ENCODE measurements at regions of chr3 and their contacts with region 1.

Region 1: GRCh38 chr3:160941885-160942494 is 163.2 kb downstream of the B3GALNT1 start:
- DNase-seq: no peak
- H3K4me3 ChIP-seq: no peak overlapping the region
- H3K27ac ChIP-seq: no peak overlapping the region
- H3K4me1 ChIP-seq: peaks cover 4% of the 10 kb centered on the region
- H3K27me3 ChIP-seq: no peaks in the 10 kb centered on the region
- CTCF ChIP-seq: peak; percentile 95

Region 2: GRCh38 chr3:160707187-160707794 is 234.7 kb before region 1 on chr3:
- intact Hi-C with region 1: loop called (anchors 5 kb)
- DNase-seq: no peak
- H3K4me3 ChIP-seq: no peak overlapping the region
- H3K27ac ChIP-seq: no peak overlapping the region
- H3K4me1 ChIP-seq: no peaks in the 10 kb centered on the region
- H3K27me3 ChIP-seq: no peaks in the 10 kb centered on the region
- CTCF ChIP-seq: peak; percentile 75

Region 3: DNA sequence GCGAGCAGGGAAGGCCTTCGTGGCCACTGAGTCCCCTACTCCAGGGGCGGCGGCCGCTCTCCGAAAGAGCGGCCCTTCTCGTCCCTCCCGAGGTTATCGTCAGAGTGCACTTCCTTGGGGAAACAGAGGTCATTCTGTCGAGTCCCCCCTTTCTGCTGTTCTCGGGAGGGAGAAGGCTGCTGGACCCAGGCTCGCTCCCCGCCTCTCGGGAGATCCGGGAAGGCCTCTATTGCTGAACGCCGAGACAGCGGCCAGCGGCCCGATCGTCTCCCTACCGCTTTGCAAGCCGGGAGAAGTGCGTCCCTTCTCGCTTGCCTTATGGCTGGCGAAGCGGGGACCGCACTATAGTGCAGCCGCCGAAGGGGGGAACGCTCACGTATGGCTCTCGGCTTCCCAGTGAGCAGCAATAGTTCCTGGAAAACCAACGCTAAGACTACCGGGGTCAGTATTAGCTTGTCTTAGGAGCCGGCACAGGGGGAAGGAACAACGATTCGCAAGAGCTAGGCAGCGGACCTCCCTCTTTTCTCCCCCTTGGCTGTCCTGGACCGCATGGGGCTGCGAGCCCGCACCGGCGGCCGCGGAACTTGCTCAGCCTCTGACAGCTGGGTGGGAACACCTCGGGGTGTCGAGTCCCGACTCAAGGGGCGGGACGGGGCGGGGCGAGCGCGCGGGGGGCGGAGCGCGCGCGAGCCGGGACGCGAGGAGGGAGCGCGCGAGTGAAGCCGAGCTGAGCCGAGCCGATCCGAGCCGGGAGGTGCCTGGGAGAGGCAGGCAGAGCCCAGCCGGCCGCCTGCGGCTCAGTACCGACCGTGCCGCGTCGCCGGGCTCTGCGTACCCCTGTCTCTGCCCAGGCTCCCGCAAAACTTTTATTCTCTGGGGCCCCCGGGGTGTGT is 186.9 kb before region 1 on chr3:
- intact Hi-C with region 1: loop called (anchors 5 kb)
- DNase-seq: peak; percentile 94
- H3K4me3 ChIP-seq: peak overlapping the region; percentile 94
- H3K27ac ChIP-seq: peak overlapping the region; percentile 96
- H3K4me1 ChIP-seq: peaks cover 55% of the 10 kb centered on the region
- H3K27me3 ChIP-seq: no peaks in the 10 kb centered on the region
- CTCF ChIP-seq: no peak

Region 4: GRCh38 chr3:160822931-160823330 is 119.1 kb before region 1 on chr3:
- intact Hi-C with region 1: no loop called
- DNase-seq: no peak
- H3K4me3 ChIP-seq: no peak overlapping the region
- H3K27ac ChIP-seq: no peak overlapping the region
- H3K4me1 ChIP-seq: peaks cover 39% of the 10 kb centered on the region
- H3K27me3 ChIP-seq: no peaks in the 10 kb centered on the region
- CTCF ChIP-seq: no peak

Region 5: DNA sequence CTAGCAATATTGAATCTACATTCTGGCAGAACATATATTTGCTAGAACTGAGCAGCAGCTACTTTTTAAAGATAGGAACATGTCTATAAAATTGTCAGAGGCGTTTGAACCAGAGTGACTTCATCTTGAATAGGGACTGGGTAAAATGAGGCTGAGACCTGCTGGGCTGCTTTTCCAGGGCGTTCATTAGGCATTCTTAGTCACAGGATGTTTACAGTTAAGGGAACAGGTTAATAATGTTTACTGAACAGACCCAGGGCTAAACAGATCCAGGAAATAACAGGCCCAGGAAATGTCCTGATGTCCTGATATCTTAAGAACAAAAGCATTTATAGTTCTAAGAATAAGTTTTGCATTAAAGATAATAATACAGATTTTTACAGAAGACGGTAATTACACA is 197.7 kb after region 1 on chr3:
- intact Hi-C with region 1: no loop called
- DNase-seq: no peak
- H3K4me3 ChIP-seq: no peak overlapping the region
- H3K27ac ChIP-seq: no peak overlapping the region
- H3K4me1 ChIP-seq: peaks cover 5% of the 10 kb centered on the region
- H3K27me3 ChIP-seq: no peaks in the 10 kb centered on the region
- CTCF ChIP-seq: no peak